Prostate gland (tissue), 2 donors: ENCODE measurements at regions of chr20 and their contacts with region 1.

Region 1: GRCh38 chr20:6135347-6135746 is 12.5 kb upstream of the FERMT1 start:
- DNase-seq: no peak
- H3K4me3 ChIP-seq: no peak overlapping the region
- H3K27ac ChIP-seq: no peak overlapping the region
- H3K4me1 ChIP-seq: no peaks in the 10 kb centered on the region
- H3K27me3 ChIP-seq: no peaks in the 10 kb centered on the region
- CTCF ChIP-seq: no peak
- POLR2A ChIP-seq: no peak

Region 2: GRCh38 chr20:7285918-7286556 is 1150.7 kb after region 1 on chr20:
- intact Hi-C with region 1: loop called (anchors 5 kb)
- DNase-seq: peak; percentile 66
- H3K4me3 ChIP-seq: no peak overlapping the region
- H3K27ac ChIP-seq: no peak overlapping the region
- H3K4me1 ChIP-seq: no peaks in the 10 kb centered on the region
- H3K27me3 ChIP-seq: no peaks in the 10 kb centered on the region
- CTCF ChIP-seq: peak in 3 of 4 experiments; percentile 63 to 71 (median 64)
- POLR2A ChIP-seq: no peak